Posterior vena cava (tissue), 2 donors: ENCODE measurements at regions of chr4 and their contacts with region 1.

Region 1: GRCh38 chr4:36493251-36493650 is 211.8 kb downstream of the DTHD1 start:
- DNase-seq: no peak

Region 2: GRCh38 chr4:36414248-36414647 is 79.0 kb before region 1 on chr4:
- intact Hi-C with region 1: loop called in 1 of 2 experiments (anchors 2 kb)
- DNase-seq: no peak